ENCODE measurements at regions of chr14 and their contacts with region 1.

Region 1: DNA sequence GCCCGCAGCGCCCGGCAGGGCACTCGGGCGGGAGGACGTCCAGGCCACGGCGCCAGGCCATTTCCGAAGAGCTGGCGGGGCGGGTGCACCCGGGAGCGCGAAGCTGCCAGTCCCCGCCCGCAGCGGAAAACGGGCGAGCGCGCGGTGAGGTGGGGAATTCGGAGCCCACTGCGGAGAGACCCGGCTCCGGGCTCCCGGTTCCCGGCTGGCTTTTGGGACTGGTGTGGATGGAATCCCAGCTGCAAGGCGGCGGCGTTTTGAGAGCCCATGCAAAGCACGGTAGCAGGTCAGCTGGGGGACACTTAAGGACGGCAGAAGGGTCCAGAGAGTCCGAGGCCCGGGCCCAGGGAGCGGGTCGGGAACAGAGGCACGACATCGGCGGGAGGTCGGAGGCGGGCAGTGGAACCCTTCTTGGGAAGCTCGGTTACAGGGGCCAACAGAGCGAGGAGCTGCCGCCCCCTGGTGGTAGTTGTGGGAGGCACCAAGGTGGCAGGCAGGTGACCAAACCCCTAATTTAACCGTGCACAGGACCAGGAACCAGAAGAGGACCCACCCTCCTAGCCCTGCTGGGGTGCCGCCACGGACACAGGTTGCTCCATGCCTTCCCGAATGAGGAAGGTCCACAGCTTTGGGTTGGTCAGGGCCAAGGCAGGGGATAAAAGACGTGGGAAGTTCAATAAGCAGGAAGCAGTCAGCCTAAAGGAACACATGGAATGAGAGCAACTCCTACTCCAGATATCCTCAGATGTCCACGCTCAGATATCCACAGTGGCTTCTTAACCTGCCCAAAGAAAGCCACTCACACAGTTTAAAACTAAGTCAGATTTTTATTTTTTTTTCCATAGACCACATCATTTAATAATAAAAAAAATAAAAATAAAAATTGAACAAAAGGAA is 685 bp upstream of the CDH24 start:
- DNase-seq: peak; percentile 86 to 94
- ATAC-seq: peak; percentile 72 to 83 (median 73)
- H3K4me3 ChIP-seq: peak overlapping the region; percentile 58
- H3K4me3 Mint-ChIP-seq: peak overlapping the region; percentile 82
- H3K27ac ChIP-seq: no peak overlapping the region
- H3K27ac Mint-ChIP-seq: peak overlapping the region; percentile 60 to 74
- H3K4me1 ChIP-seq: peaks cover 18% of the 10 kb centered on the region
- H3K4me1 Mint-ChIP-seq: peaks cover 17 to 27% of the 10 kb centered on the region in 2 donors
- H3K27me3 ChIP-seq: no peaks in the 10 kb centered on the region
- H3K27me3 Mint-ChIP-seq: peaks cover 0 to 3% of the 10 kb centered on the region in 2 donors
- CTCF ChIP-seq: peak; percentile 98

Region 2: DNA sequence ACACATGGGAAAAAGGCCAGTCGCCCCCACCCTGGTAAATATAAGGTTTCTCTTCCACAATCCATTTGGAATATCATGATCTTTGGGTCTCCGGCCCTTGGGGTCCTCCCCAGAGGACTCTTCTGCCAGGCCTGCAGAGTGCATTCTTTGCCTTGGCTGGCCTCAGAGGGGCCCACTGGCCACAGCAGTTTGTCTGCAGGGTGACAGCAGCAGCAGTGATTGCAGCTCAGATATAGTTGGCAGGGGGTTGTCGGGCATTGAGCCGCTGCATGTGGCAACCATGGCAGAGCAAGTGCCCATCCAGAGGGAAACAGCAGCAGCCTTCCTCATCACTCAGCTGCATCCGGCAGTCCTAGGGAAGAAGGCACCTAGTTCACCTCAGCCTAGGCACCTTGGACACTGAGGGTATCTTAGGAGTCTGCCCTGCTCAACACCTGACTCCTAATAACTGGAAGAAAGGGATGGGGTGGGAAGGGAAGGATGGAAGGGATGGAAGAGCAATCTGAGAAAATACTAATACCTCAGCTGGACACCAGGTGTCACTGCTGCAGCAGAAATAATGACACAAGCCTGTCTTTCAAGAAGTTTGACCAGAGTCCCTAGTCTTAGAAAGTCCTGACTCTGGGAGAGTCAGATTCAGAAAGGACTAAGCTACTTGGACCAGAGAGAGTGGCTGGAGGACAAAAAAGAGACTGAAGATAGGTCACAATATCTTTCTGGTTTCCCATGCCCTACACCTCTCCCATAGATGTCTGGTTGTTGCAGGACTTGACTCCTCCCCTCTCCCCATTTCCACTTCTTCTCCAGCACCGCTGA is 84.6 kb before region 1 on chr14:
- intact Hi-C with region 1: loop called (anchors 1 kb)
- DNase-seq: peak; percentile 28 to 75
- ATAC-seq: peak; percentile 61 to 82 (median 72)
- H3K4me3 ChIP-seq: no peak overlapping the region
- H3K4me3 Mint-ChIP-seq: no peak overlapping the region
- H3K27ac ChIP-seq: no peak overlapping the region
- H3K27ac Mint-ChIP-seq: no peak overlapping the region
- H3K4me1 ChIP-seq: no peaks in the 10 kb centered on the region
- H3K4me1 Mint-ChIP-seq: no peaks in the 10 kb centered on the region
- H3K27me3 ChIP-seq: no peaks in the 10 kb centered on the region
- H3K27me3 Mint-ChIP-seq: peaks cover 0 to 11% of the 10 kb centered on the region in 2 donors
- CTCF ChIP-seq: peak; percentile 63

Region 3: GRCh38 chr14:22986508-22987054 is 71.4 kb before region 1 on chr14:
- intact Hi-C with region 1: loop called (anchors 1 kb)
- DNase-seq: peak; percentile 78 to 95
- ATAC-seq: peak; percentile 70 to 82 (median 70)
- H3K4me3 ChIP-seq: no peak overlapping the region
- H3K4me3 Mint-ChIP-seq: no peak overlapping the region
- H3K27ac ChIP-seq: no peak overlapping the region
- H3K27ac Mint-ChIP-seq: no peak overlapping the region
- H3K4me1 ChIP-seq: peaks cover 15% of the 10 kb centered on the region
- H3K4me1 Mint-ChIP-seq: no peaks in the 10 kb centered on the region
- H3K27me3 ChIP-seq: peaks cover 7% of the 10 kb centered on the region
- H3K27me3 Mint-ChIP-seq: no peaks in the 10 kb centered on the region
- CTCF ChIP-seq: peak; percentile 83

Region 4: DNA sequence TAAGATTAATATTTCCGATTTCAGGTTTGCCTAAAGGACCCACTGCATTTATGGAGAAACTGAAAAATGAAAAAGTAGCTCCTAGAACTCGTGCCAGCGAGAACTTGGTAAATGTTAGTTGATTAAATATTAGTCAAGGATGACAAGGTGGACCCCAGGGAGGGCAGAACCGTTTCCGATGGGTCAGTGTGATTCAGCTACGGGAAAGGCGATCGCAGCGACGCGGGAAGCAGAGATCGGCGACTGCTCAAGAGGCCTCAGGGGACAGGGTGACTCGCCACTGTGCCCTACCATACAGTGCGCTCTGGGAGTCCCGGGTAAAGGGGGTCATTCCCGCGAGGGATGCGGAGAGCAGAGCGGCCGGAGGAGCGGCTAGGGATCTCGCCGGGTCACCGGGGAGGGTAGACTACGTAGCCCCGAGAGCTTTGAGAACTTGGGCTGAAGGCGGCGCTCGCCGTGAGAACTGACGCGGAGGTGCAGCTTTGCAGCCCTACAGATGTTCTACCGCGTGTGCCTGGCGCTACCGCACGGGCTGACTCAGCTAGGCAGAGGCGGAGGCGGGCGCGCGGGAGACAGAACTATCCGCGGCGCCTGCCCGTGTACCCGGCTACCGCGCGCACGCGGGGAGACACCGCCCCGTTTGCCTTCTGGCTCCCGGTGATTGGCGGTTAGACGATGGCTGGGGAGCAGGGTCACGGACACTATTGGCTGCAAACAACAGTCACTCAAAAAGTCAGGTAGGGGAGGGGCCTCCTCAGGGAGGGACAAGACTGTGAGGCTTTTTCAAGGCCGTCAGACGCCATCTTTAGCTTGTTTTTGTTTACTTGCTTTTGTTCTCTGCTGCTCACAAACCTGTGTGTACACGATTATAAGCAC is 51.2 kb before region 1 on chr14:
- intact Hi-C with region 1: loop called (anchors 5 kb)
- DNase-seq: peak; percentile 95 to 99
- ATAC-seq: peak; percentile 91 to 99 (median 93)
- H3K4me3 ChIP-seq: peak overlapping the region; percentile 93
- H3K4me3 Mint-ChIP-seq: peak overlapping the region; percentile 98
- H3K27ac ChIP-seq: peak overlapping the region; percentile 91
- H3K27ac Mint-ChIP-seq: peak overlapping the region; percentile 97 to 98
- H3K4me1 ChIP-seq: peaks cover 23% of the 10 kb centered on the region
- H3K4me1 Mint-ChIP-seq: peaks cover 30 to 38% of the 10 kb centered on the region in 2 donors
- H3K27me3 ChIP-seq: no peaks in the 10 kb centered on the region
- H3K27me3 Mint-ChIP-seq: no peaks in the 10 kb centered on the region
- CTCF ChIP-seq: peak; percentile 18

Region 5: GRCh38 chr14:23186913-23187654 is 129.1 kb after region 1 on chr14:
- intact Hi-C with region 1: no loop called
- DNase-seq: peak in 1 of 2 donors; percentile 66
- ATAC-seq: peak in 1 of 3 donors; percentile 41
- H3K4me3 ChIP-seq: no peak overlapping the region
- H3K4me3 Mint-ChIP-seq: no peak overlapping the region
- H3K27ac ChIP-seq: no peak overlapping the region
- H3K27ac Mint-ChIP-seq: no peak overlapping the region
- H3K4me1 ChIP-seq: peaks cover 10% of the 10 kb centered on the region
- H3K4me1 Mint-ChIP-seq: no peaks in the 10 kb centered on the region
- H3K27me3 ChIP-seq: peaks cover under 1% of the 10 kb centered on the region
- H3K27me3 Mint-ChIP-seq: peaks cover 0 to 5% of the 10 kb centered on the region in 2 donors
- CTCF ChIP-seq: peak; percentile 39